ENCODE measurements at regions of chrX and their contacts with region 1.

Region 1: GRCh38 chrX:120769576-120770341 is 105.9 kb downstream of the CT47B1 start:
- DNase-seq: peak; percentile 16
- ATAC-seq: peak; percentile 69; the same call in 1 of the 2 replicates
- H3K4me3 ChIP-seq: no peak overlapping the region
- H3K27ac ChIP-seq: no peak overlapping the region
- H3K4me1 ChIP-seq: 0 out of 4 replicates have a peak, but pooled peaks cover 0 to 4% of the 10 kb centered on the region in 2 experiments
- H3K27me3 ChIP-seq: no peaks in the 10 kb centered on the region
- CTCF ChIP-seq: peak; percentile 30 to 45 (median 45); a peak in 4 of 6 replicates
- POLR2A ChIP-seq: no peak
- RAD21 ChIP-seq: peak; percentile 62

Region 2: GRCh38 chrX:120499301-120500072 is 270.3 kb before region 1 on chrX:
- CTCF ChIA-PET with region 1: no interaction called
- POLR2A ChIA-PET with region 1: no interaction called
- RAD21 ChIA-PET with region 1: no interaction called
- intact Hi-C with region 1: loop called (anchors 1 kb)
- DNase-seq: no peak
- ATAC-seq: no peak
- H3K4me3 ChIP-seq: no peak overlapping the region
- H3K27ac ChIP-seq: no peak overlapping the region
- H3K4me1 ChIP-seq: no peaks in the 10 kb centered on the region
- H3K27me3 ChIP-seq: no peaks in the 10 kb centered on the region
- CTCF ChIP-seq: no peak
- POLR2A ChIP-seq: no peak
- RAD21 ChIP-seq: no peak